CD8-positive, alpha-beta memory T cell (primary cell): ENCODE measurements at regions of chr5 and their contacts with region 1.

Region 1: GRCh38 chr5:146533260-146533857 is 17.4 kb upstream of the GPR151 start:
- DNase-seq: peak; percentile 45 to 81 (median 51)
- H3K4me3 ChIP-seq: no peak overlapping the region
- H3K4me3 Mint-ChIP-seq: no peak overlapping the region
- H3K27ac ChIP-seq: no peak overlapping the region
- H3K27ac Mint-ChIP-seq: peak overlapping the region in 1 of 8 donors; percentile 78
- H3K4me1 ChIP-seq: no peaks in the 10 kb centered on the region
- H3K4me1 Mint-ChIP-seq: peaks cover 3 to 5% (median 4%) of the 10 kb centered on the region in 3 donors
- H3K27me3 ChIP-seq: no peaks in the 10 kb centered on the region
- H3K27me3 Mint-ChIP-seq: peaks cover under 1 to 3% of the 10 kb centered on the region in 2 donors

Region 2: DNA sequence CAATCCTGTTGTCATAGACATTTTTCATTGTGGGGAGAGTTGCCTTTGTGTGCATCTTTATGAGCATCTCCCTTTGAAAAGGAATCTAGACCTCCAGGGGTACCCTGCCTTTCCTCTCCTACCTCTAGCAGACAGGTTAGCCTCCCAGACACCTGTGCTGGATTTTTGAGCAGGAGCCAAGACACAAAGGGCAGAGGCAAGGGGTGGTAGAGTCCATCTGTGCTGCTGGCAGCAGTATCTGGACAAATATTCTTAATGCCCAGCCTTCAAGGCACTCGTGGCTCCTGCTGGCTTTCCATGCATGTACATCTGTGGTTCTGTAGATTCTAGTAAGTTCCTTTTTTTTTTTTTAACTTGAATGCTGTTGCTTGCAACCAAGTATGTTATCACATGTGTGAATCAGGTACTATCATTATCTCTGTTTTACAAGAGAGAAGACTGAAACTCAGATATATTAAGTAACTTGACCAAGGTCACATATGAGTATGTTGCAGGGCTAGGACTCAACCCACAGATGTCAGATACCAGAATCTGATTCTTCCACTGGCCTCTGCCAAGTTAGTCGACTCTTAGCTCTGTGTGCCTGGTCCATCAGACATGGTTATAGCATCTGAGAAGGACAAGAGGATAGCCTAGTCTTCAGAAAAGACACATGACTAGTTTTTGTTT is 15.6 kb after region 1 on chr5:
- CTCF ChIA-PET with region 1: interaction called, 12 read pairs
- POLR2A ChIA-PET with region 1: no interaction called
- DNase-seq: no peak
- H3K4me3 ChIP-seq: no peak overlapping the region
- H3K4me3 Mint-ChIP-seq: no peak overlapping the region
- H3K27ac ChIP-seq: no peak overlapping the region
- H3K27ac Mint-ChIP-seq: no peak overlapping the region
- H3K4me1 ChIP-seq: no peaks in the 10 kb centered on the region
- H3K4me1 Mint-ChIP-seq: no peaks in the 10 kb centered on the region
- H3K27me3 ChIP-seq: no peaks in the 10 kb centered on the region
- H3K27me3 Mint-ChIP-seq: peaks cover 6 to 44% of the 10 kb centered on the region in 2 donors

Region 3: DNA sequence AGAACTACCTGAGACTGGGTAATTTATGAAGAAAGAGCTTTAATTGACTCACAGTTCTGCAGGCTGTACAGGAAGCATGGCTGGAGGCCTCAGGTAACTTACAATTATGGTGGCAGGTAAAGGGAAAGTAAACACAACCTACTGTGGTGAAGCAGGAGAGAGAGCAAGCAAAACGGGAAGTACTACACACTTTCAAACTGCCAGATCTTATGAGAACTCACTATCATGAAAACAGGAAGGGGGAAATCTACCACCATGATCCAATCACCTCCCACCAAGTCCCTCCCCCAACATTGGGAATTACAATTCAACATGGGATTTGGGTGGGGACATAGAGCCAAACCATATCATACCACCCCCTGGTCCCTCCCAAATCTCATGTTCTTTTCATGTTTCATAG is 41.4 kb after region 1 on chr5:
- CTCF ChIA-PET with region 1: no interaction called
- POLR2A ChIA-PET with region 1: no interaction called
- DNase-seq: no peak
- H3K4me3 ChIP-seq: no peak overlapping the region
- H3K4me3 Mint-ChIP-seq: no peak overlapping the region
- H3K27ac ChIP-seq: no peak overlapping the region
- H3K27ac Mint-ChIP-seq: peak overlapping the region in 1 of 8 donors; percentile 47
- H3K4me1 ChIP-seq: no peaks in the 10 kb centered on the region
- H3K4me1 Mint-ChIP-seq: no peaks in the 10 kb centered on the region
- H3K27me3 ChIP-seq: no peaks in the 10 kb centered on the region
- H3K27me3 Mint-ChIP-seq: peaks cover 9 to 14% of the 10 kb centered on the region in 2 donors